ENCODE measurements at regions of chr11 and their contacts with region 1.

Region 1: DNA sequence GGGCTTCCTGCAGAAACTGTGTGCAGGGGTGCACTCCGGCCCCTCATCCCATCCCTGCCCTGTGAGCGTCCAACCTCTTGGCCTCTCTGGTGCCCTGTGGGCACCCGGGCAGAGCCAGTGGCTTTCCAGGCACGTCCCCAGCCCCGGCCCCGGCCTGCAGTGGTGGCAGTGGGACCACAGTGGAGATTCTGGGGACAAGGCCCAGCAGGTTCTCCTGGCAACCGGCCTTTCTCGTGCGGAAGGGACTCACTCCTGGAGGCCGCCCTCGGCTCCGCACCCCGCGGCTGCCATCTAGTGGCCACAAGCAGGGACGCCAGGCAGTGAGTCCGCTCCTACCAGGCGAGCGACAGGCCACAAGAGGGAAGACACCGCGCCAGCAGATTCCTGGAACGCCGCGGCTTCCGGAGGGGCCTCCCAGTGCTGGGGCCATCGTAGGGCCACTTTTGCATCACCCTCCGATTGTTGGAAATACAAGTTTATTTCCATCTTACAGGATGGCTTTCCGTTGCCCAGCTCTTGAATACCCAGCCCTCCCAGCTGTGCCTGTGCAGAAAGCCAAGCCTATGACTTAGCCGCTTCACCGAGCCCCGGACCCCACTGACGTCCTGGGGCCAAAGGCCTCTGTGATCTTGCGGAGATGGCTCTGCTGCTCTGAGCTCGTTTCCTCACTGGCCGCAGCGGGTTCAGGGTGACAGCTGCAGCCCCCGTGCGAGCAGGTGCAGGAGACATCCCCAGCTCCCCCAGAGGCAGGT is 357.3 kb downstream of the CTTN start:
- DNase-seq: peak; percentile 83
- H3K4me3 ChIP-seq: no peak overlapping the region
- H3K27ac ChIP-seq: no peak overlapping the region
- H3K4me1 ChIP-seq: no peaks in the 10 kb centered on the region
- H3K27me3 ChIP-seq: no peaks in the 10 kb centered on the region
- CTCF ChIP-seq: peak; percentile 88 to 92 (median 91)
- POLR2A ChIP-seq: no peak

Region 2: GRCh38 chr11:70467201-70468085 is 288.1 kb before region 1 on chr11:
- intact Hi-C with region 1: loop called (anchors 10 kb)
- DNase-seq: peak; percentile 78
- H3K4me3 ChIP-seq: no peak overlapping the region
- H3K27ac ChIP-seq: no peak overlapping the region
- H3K4me1 ChIP-seq: no peaks in the 10 kb centered on the region
- H3K27me3 ChIP-seq: no peaks in the 10 kb centered on the region
- CTCF ChIP-seq: peak; percentile 79 to 91 (median 82)
- POLR2A ChIP-seq: no peak

Region 3: GRCh38 chr11:71114124-71114851 is 358.7 kb after region 1 on chr11:
- intact Hi-C with region 1: no loop called
- DNase-seq: no peak
- H3K4me3 ChIP-seq: no peak overlapping the region
- H3K27ac ChIP-seq: no peak overlapping the region
- H3K4me1 ChIP-seq: no peaks in the 10 kb centered on the region
- H3K27me3 ChIP-seq: no peaks in the 10 kb centered on the region
- CTCF ChIP-seq: peak in 1 of 3 experiments; percentile 4
- POLR2A ChIP-seq: no peak